ENCODE measurements at regions of chr12 and their contacts with region 1.

Region 1: GRCh38 chr12:25130741-25131188 is 64.2 kb downstream of the DNAI7 start:
- H3K4me3 ChIP-seq: no peak overlapping the region
- H3K27ac ChIP-seq: no peak overlapping the region
- H3K4me1 ChIP-seq: no peaks in the 10 kb centered on the region
- CTCF ChIP-seq: no peak

Region 2: DNA sequence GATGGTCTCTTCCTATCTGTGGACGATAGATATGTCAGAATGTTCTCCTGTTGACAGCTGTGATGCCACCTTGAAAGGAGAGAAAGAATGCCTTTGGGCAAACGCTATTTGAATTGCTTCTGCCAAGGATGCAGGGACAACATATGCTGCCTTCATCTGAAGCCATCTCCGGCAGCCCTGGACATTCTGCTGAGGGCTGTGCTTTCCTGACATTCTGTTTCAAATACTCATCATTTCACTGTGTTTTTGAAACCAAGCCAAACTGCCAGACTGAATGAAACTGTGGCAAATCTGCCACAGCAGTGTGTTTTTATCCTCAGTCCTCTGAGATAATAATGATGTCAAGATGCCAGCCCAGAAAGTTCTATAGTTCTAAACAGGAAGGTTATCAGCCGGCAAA is 96.1 kb before region 1 on chr12:
- CTCF ChIA-PET with region 1: no interaction called
- POLR2A ChIA-PET with region 1: no interaction called
- H3K4me3 ChIP-seq: no peak overlapping the region
- H3K27ac ChIP-seq: no peak overlapping the region
- H3K4me1 ChIP-seq: no peaks in the 10 kb centered on the region
- CTCF ChIP-seq: no peak

Region 3: DNA sequence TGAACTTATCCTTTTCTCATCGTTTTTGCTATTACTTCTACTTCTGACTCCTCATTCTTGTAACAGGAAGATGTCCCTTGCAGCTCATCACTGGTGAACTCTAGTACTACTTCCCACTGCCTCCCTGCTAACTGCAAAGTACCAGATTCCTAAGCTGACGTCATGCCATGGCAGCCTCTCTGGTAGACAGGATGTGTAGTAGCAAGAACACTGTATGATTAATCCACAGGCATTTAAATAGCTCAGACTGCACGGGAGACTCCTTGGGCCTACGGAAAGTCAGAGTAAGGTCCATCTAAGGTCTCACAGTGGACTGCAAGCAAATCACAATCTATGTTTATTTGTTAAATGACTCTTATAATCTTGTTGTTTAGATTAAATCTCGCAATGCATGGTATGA is 20.7 kb after region 1 on chr12:
- CTCF ChIA-PET with region 1: interaction called, 11 read pairs
- POLR2A ChIA-PET with region 1: no interaction called
- H3K4me3 ChIP-seq: no peak overlapping the region
- H3K27ac ChIP-seq: no peak overlapping the region
- H3K4me1 ChIP-seq: no peaks in the 10 kb centered on the region
- CTCF ChIP-seq: no peak

Region 4: GRCh38 chr12:25162866-25163265 is 32.1 kb after region 1 on chr12:
- CTCF ChIA-PET with region 1: no interaction called
- POLR2A ChIA-PET with region 1: no interaction called
- H3K4me3 ChIP-seq: no peak overlapping the region
- H3K27ac ChIP-seq: no peak overlapping the region
- H3K4me1 ChIP-seq: no peaks in the 10 kb centered on the region
- CTCF ChIP-seq: no peak

Region 5: GRCh38 chr12:25550186-25550585 is 419.4 kb after region 1 on chr12:
- CTCF ChIA-PET with region 1: no interaction called
- POLR2A ChIA-PET with region 1: no interaction called
- H3K4me3 ChIP-seq: no peak overlapping the region
- H3K27ac ChIP-seq: no peak overlapping the region
- H3K4me1 ChIP-seq: no peaks in the 10 kb centered on the region
- CTCF ChIP-seq: no peak

Measured in HEK293 (cell line).